ENCODE measurements at regions of chr12 and their contacts with region 1.

Region 1: DNA sequence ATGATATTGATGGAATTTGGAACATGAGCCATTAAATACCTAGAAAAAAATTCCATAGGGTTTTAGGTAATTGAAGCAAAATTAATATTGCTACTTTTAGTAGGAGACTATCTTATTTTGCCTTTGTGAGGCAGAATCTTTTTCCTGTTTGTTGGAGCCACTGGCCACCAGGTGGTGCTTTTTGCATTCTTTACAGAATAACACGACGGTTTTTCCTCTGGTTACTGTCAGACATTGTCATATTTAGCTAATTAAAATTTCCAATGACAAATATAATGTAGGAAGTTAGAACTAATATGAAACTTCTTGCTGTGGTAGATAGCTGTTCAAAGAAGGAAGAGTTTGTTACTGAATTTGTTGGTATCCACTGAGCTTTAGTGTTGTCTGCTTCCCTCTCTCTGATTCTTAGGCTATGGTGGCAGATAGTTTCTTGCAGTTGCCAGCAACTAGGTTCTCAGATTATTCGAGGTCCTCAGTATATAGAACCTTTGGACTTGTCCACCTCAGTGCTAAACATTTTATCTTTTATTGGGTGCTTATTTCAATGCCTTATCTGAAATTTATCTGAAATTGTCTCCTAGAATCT is 25.7 kb downstream of the RAB21 start:
- DNase-seq: peak; percentile 55
- ATAC-seq: no peak
- H3K4me3 Mint-ChIP-seq: no peak overlapping the region
- H3K27ac Mint-ChIP-seq: no peak overlapping the region
- H3K4me1 Mint-ChIP-seq: no peaks in the 10 kb centered on the region
- H3K27me3 Mint-ChIP-seq: no peaks in the 10 kb centered on the region

Region 2: DNA sequence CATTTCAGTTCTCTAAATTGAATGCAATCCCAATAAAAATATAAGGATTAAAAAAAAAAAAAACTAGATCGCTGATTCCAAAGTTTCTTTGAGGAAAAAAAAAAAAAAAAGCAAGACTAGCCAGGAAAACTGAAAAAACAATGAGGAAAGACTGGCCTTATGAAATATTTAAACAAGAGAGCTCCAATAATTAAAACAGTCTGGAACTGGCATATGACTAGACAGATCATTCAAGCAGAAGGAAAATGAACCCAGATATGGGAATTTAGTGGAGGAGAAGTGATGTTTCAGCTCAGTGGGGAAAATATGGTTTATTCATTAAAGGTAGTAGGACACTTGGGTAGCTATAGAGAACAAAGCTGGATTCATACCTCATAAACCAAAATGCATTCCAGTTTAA is 17.2 kb after region 1 on chr12:
- CTCF ChIA-PET with region 1: interaction called, 13 read pairs
- POLR2A ChIA-PET with region 1: no interaction called
- DNase-seq: no peak
- ATAC-seq: no peak
- H3K4me3 Mint-ChIP-seq: no peak overlapping the region
- H3K27ac Mint-ChIP-seq: no peak overlapping the region
- H3K4me1 Mint-ChIP-seq: no peaks in the 10 kb centered on the region
- H3K27me3 Mint-ChIP-seq: peaks cover 2% of the 10 kb centered on the region

Region 3: GRCh38 chr12:71840231-71840847 is 60.0 kb after region 1 on chr12:
- CTCF ChIA-PET with region 1: interaction called, 53 read pairs
- POLR2A ChIA-PET with region 1: no interaction called
- DNase-seq: peak; percentile 38
- ATAC-seq: peak; percentile 27
- H3K4me3 Mint-ChIP-seq: peak overlapping the region; percentile 95
- H3K27ac Mint-ChIP-seq: peak overlapping the region; percentile 98
- H3K4me1 Mint-ChIP-seq: peaks cover 31% of the 10 kb centered on the region
- H3K27me3 Mint-ChIP-seq: no peaks in the 10 kb centered on the region

Region 4: DNA sequence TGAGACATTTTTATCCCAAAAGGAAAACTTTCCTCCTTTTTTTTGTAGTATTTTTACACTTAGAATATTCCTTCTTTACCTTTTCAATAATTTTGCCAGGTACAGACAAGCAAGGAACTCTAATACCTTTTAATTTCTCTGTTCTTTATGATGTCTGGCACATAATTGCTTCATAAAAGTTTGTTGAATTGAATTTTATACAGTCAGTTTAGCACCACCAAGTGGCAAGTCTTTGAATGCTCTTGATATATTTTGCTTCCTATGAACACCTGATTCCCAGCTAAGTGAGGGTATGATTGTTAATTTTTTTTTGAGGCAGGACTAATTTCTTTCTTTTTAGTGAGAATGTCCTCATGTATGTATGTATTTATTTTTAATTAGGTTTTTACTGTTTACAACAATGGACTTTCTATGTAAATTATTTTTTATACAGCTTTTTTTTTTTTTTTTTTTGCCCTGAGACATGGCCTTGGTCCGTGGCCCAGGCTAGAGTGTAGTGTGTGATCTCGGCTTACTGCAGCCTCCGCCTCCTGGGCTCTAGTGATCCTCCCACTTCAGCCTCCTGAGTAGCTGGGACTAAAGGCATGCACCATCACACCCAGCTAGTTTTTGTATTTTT is 66.1 kb after region 1 on chr12:
- CTCF ChIA-PET with region 1: interaction called, 53 read pairs
- POLR2A ChIA-PET with region 1: no interaction called
- DNase-seq: peak; percentile 26
- ATAC-seq: no peak
- H3K4me3 Mint-ChIP-seq: no peak overlapping the region
- H3K27ac Mint-ChIP-seq: no peak overlapping the region
- H3K4me1 Mint-ChIP-seq: peaks cover 7% of the 10 kb centered on the region
- H3K27me3 Mint-ChIP-seq: no peaks in the 10 kb centered on the region